BJ (cell line): ENCODE measurements at regions of chr4 and their contacts with region 1.

Region 1: DNA sequence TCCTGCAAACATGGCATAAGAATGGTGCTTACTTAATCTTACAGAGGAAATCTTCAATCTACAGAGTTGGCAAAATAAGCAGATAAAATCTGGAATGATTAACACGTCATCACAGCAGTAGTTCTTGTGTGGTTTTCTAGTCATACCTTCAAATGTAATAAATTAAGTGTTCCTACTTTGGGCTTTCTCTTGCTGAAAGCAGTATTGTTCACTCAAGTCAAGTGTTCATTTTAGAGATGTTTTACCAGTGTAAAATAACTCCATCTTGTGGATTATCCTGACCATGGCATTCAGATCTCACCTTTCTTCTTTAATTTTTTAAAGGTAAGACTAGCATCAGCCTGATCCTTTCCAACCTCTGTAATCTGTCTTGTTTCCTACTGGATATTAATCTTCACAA is 72.9 kb downstream of the ADAMTS3 start:
- DNase-seq: no peak
- H3K4me3 ChIP-seq: no peak overlapping the region
- H3K27me3 ChIP-seq: no peaks in the 10 kb centered on the region
- CTCF ChIP-seq: peak; percentile 23; the same call in 1 of the 2 replicates

Region 2: GRCh38 chr4:72295966-72296557 is 200.1 kb before region 1 on chr4:
- CTCF ChIA-PET with region 1: interaction called, 10 read pairs
- POLR2A ChIA-PET with region 1: no interaction called
- DNase-seq: no peak
- H3K4me3 ChIP-seq: no peak overlapping the region
- H3K27me3 ChIP-seq: no peaks in the 10 kb centered on the region
- CTCF ChIP-seq: peak; percentile 67

Region 3: GRCh38 chr4:72302981-72303704 is 193.0 kb before region 1 on chr4:
- CTCF ChIA-PET with region 1: interaction called, 18 read pairs
- POLR2A ChIA-PET with region 1: no interaction called
- DNase-seq: no peak
- H3K4me3 ChIP-seq: no peak overlapping the region
- H3K27me3 ChIP-seq: no peaks in the 10 kb centered on the region
- CTCF ChIP-seq: peak; percentile 67

Region 4: GRCh38 chr4:72531768-72532290 is 35.7 kb after region 1 on chr4:
- CTCF ChIA-PET with region 1: no interaction called
- POLR2A ChIA-PET with region 1: no interaction called
- DNase-seq: no peak
- H3K4me3 ChIP-seq: no peak overlapping the region
- H3K27me3 ChIP-seq: no peaks in the 10 kb centered on the region
- CTCF ChIP-seq: no peak